Common myeloid progenitor, CD34-positive (primary cell): ENCODE measurements at regions of chr19 and their contacts with region 1.

Region 1: DNA sequence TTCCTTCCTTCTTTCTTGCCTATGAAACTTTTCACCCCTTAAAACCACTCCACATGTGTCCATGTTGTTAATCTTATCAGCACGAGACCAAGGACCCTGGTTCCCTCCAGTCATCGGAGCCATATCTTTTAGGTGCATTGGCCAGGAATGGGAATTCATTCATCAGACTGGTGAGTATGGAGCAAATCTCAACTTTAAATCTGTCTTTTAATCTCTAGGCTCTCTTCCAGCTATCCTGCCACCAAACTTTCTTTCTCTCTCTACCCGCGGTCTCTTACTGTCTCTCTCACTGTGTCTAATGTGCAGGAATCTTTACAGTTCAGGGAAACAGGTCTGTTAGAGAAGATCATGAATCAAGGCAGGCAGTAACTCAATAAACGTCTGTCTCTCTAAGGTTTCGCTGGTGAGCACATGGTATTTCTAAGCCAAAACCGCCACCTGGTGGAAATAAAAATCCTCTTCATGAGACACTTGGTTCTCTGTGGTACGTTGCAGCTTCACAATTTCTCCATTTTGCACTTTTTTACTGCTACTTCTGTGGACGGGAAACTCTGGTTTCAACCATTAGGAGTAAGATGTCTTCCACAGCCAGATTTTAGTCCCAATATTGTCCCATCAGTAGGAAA is 16.1 kb downstream of the LGALS16 start:
- DNase-seq: peak; percentile 66 to 83 (median 80)
- H3K4me3 ChIP-seq: no peak overlapping the region
- H3K27ac ChIP-seq: no peak overlapping the region
- H3K4me1 ChIP-seq: peaks cover 0 to 13% (median 4%) of the 10 kb centered on the region in 4 experiments
- H3K27me3 ChIP-seq: peaks cover 0 to 12% (median 2%) of the 10 kb centered on the region in 5 experiments

Region 2: GRCh38 chr19:39539519-39540332 is 132.1 kb before region 1 on chr19 and contains the start of gene EID2:
- CTCF ChIA-PET with region 1: interaction called, 11 read pairs
- POLR2A ChIA-PET with region 1: no interaction called
- DNase-seq: peak; percentile 94 to 96 (median 95)
- H3K4me3 ChIP-seq: peak within 1 kb of the TSS; percentile 67 to 97 (median 92)
- H3K27ac ChIP-seq: peak within 1 kb of the TSS; percentile 86 to 88
- H3K4me1 ChIP-seq: peaks cover 8 to 28% (median 16%) of the 10 kb centered on the region in 4 experiments
- H3K27me3 ChIP-seq: no peaks in the 10 kb centered on the region

Region 3: GRCh38 chr19:39550197-39550596 is 121.7 kb before region 1 on chr19:
- CTCF ChIA-PET with region 1: interaction called, 16 read pairs
- POLR2A ChIA-PET with region 1: no interaction called
- DNase-seq: no peak
- H3K4me3 ChIP-seq: no peak overlapping the region
- H3K27ac ChIP-seq: no peak overlapping the region
- H3K4me1 ChIP-seq: peaks cover 0 to 18% (median 15%) of the 10 kb centered on the region in 4 experiments
- H3K27me3 ChIP-seq: peaks cover 0 to 3% (median 0%) of the 10 kb centered on the region in 5 experiments

Region 4: GRCh38 chr19:39655613-39656012 is 16.2 kb before region 1 on chr19 and contains the start of gene LGALS16:
- CTCF ChIA-PET with region 1: no interaction called
- POLR2A ChIA-PET with region 1: no interaction called
- DNase-seq: no peak
- H3K4me3 ChIP-seq: no peak within 1 kb of the TSS
- H3K27ac ChIP-seq: no peak within 1 kb of the TSS
- H3K4me1 ChIP-seq: no peaks in the 10 kb centered on the region
- H3K27me3 ChIP-seq: peaks cover 0 to 25% (median 4%) of the 10 kb centered on the region in 5 experiments

Region 5: GRCh38 chr19:39684263-39684662 is 12.4 kb after region 1 on chr19:
- CTCF ChIA-PET with region 1: interaction called, 17 read pairs
- POLR2A ChIA-PET with region 1: no interaction called
- DNase-seq: no peak
- H3K4me3 ChIP-seq: no peak overlapping the region
- H3K27ac ChIP-seq: no peak overlapping the region
- H3K4me1 ChIP-seq: no peaks in the 10 kb centered on the region
- H3K27me3 ChIP-seq: no peaks in the 10 kb centered on the region